ENCODE measurements at regions of chr7 and their contacts with region 1.

Region 1: DNA sequence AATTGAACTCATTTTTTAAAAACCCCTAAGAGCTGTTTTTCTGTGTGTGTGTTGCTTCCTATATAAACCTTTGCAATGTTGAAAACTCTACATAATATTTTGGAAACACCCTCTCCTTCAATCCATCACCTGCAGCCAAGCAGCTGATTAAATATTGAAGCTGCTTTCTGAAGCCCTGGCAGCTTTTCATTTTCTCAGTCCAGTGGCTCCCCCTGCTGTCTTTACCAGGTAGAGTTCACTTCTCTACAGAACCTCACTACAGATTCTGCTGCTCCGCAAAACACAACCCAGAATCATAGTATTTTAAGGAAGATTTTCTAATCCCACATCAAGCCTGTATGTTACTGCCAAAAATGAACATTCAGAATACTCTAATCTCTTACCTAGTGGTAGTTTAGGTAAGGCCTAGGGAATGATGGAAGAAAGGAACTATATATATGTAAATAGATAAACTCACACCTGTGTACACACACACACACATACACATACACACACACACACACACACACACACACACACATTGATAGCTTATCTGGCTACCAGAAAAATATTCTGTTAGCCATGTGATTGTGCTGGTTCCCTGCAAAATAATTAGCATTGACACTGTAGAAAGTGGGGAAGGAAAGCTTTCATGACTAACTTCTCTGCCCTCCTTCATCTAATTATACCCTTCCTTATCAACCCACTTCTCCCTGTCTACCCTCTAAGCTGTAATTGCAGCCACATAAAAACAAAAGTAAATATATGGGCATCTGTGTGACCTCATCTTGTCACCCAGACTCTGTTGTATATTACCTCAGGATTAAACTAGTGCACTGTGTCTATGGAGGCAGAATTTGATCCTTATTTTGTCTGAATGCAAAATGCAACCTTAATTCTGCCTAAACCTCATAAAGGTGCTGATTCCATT is 229.5 kb upstream of the FZD1 start:
- ATAC-seq: peak in 7 of 8 experiments; percentile 35 to 93 (median 76)
- H3K4me3 ChIP-seq: no peak overlapping the region
- H3K27ac ChIP-seq: no peak overlapping the region
- H3K4me1 ChIP-seq: no peaks in the 10 kb centered on the region

Region 2: DNA sequence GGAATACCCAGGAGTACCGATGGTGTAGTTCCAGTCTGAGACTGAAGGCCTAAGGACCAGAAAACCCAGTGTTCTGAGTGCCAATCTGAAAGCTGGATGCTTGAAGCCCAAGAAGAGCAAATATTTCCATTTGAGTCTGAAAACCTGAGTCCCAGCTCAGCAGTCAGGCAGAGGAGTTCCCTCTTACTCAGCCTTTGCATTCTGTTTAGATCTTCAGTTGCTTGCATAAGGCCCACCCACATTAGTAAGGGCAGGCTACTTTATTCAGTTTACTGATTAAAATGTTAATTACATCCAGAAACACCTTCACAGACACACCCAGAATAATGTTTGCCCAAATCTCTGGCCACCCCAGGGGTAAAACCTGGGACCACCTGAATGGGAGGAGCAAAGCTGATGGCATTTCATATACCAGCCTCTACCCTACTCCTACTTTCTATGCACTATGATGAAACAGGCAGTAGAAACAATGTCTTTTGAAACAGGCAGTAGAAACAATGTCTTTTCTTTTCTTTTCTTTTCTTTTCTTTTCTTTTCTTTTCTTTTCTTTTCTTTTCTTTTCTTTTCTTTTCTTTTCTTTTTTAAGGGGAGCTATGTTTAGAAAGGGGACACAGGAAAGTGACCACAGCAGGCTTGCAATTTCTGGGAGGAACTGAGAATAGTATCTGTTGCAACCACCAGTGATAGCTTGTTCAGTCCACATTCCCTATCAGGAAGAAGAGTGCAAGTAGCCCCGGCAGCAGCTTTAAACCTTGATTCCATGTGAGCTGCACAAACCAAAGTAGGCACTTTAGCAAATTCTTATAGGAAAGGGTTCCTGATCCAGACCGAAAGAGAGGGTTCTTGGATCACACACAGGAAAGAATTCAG is 744.2 kb before region 1 on chr7:
- in situ Hi-C with region 1: no loop called
- ATAC-seq: peak in 3 of 8 experiments; percentile 53 to 98 (median 93)
- H3K4me3 ChIP-seq: no peak overlapping the region
- H3K27ac ChIP-seq: no peak overlapping the region
- H3K4me1 ChIP-seq: no peaks in the 10 kb centered on the region

Region 3: GRCh38 chr7:90455163-90456030 is 579.3 kb before region 1 on chr7:
- in situ Hi-C with region 1: loop called in 3 of 9 experiments (anchors 25 kb)
- ATAC-seq: peak in 7 of 8 experiments; percentile 48 to 91 (median 83)
- H3K4me3 ChIP-seq: no peak overlapping the region
- H3K27ac ChIP-seq: no peak overlapping the region
- H3K4me1 ChIP-seq: peaks cover 0 to 2% of the 10 kb centered on the region in 2 donors

Region 4: DNA sequence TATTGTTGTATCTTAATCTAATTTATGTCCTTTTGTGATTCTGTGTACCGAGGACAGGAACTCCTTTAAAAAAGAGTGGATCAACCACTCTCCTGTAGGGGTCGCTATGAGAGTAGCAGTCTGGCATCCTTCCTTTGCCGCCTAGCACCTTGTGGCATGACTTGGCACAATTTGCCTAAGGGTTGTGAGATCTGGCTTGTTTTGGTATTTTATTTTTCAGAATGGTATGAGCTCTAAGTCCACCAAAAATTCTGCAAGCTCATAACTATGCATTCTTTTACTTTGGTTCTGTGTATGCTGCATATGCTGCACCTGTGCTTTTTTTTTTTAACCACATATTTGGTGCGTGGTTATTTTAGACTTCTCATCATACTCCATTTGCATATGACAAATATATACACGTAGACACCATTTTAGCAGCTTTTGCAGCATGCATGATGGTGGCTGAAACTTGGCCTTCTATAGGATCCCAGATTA is 325.8 kb before region 1 on chr7:
- in situ Hi-C with region 1: loop called in 1 of 9 experiments (anchors 25 kb)
- ATAC-seq: peak in 7 of 8 experiments; percentile 6 to 53 (median 27)
- H3K4me3 ChIP-seq: peak overlapping the region in 4 of 5 donors; percentile 30 to 40 (median 32)
- H3K27ac ChIP-seq: no peak overlapping the region
- H3K4me1 ChIP-seq: peaks cover 14 to 16% of the 10 kb centered on the region in 2 donors

Measured in motor neuron (in vitro differentiated cells).